ENCODE measurements at regions of chr9 and their contacts with region 1.

Region 1: GRCh38 chr9:122350638-122351355 is 20.0 kb upstream of the PTGS1 start:
- DNase-seq: peak; percentile 83 to 88 (median 88)
- ATAC-seq: peak; percentile 99
- H3K4me3 ChIP-seq: no peak overlapping the region
- H3K27ac ChIP-seq: no peak overlapping the region
- H3K4me1 ChIP-seq: peaks cover 0 to 4% of the 10 kb centered on the region in 2 experiments; a peak in 1 of 5 replicates
- H3K27me3 ChIP-seq: no peaks in the 10 kb centered on the region; a peak in 1 of 5 replicates
- CTCF ChIP-seq: peak; percentile 94 to 98 (median 98)
- EP300 ChIP-seq: no peak
- POLR2A ChIP-seq: no peak
- RAD21 ChIP-seq: peak; percentile 97 to 100

Region 2: GRCh38 chr9:121686930-121687541 is 663.8 kb before region 1 on chr9:
- CTCF ChIA-PET with region 1: no interaction called
- POLR2A ChIA-PET with region 1: no interaction called
- in situ Hi-C with region 1: loop called (anchors 25 kb)
- intact Hi-C with region 1: no loop called
- DNase-seq: peak; percentile 71 to 80 (median 74)
- ATAC-seq: peak; percentile 90
- H3K4me3 ChIP-seq: no peak overlapping the region
- H3K27ac ChIP-seq: no peak overlapping the region
- H3K4me1 ChIP-seq: no peaks in the 10 kb centered on the region
- H3K27me3 ChIP-seq: peaks cover 0 to 15% of the 10 kb centered on the region in 2 experiments; a peak in 3 of 5 replicates
- CTCF ChIP-seq: peak; percentile 80 to 87 (median 84)
- EP300 ChIP-seq: no peak
- POLR2A ChIP-seq: no peak
- RAD21 ChIP-seq: peak; percentile 51 to 81

Region 3: GRCh38 chr9:122092611-122093506 is 257.9 kb before region 1 on chr9 and contains the start of gene TTLL11:
- CTCF ChIA-PET with region 1: interaction called, 5 read pairs
- POLR2A ChIA-PET with region 1: no interaction called
- in situ Hi-C with region 1: no loop called
- intact Hi-C with region 1: loop called (anchors 1 kb)
- DNase-seq: peak; percentile 95 to 96 (median 95)
- ATAC-seq: peak; percentile 92
- H3K4me3 ChIP-seq: peak within 1 kb of the TSS; percentile 96
- H3K27ac ChIP-seq: peak within 1 kb of the TSS; percentile 52; the same call in 2 of the 3 replicates
- H3K4me1 ChIP-seq: peaks cover 9 to 20% of the 10 kb centered on the region in 2 experiments; a peak in 4 of 5 replicates
- H3K27me3 ChIP-seq: no peaks in the 10 kb centered on the region
- CTCF ChIP-seq: no peak
- EP300 ChIP-seq: no peak
- POLR2A ChIP-seq: no peak; the same call in 1 of the 2 replicates
- RAD21 ChIP-seq: no peak
- polyA plus RNA-seq, gene TTLL11: 0.83 to 1.5 TPM

Region 4: GRCh38 chr9:122099271-122099869 is 251.4 kb before region 1 on chr9:
- CTCF ChIA-PET with region 1: interaction called, 9 read pairs
- POLR2A ChIA-PET with region 1: interaction called, 3 read pairs
- in situ Hi-C with region 1: no loop called
- intact Hi-C with region 1: loop called (anchors 1 kb)
- DNase-seq: peak; percentile 76 to 88 (median 80)
- ATAC-seq: peak; percentile 90
- H3K4me3 ChIP-seq: no peak overlapping the region
- H3K27ac ChIP-seq: no peak overlapping the region
- H3K4me1 ChIP-seq: no peaks in the 10 kb centered on the region; a peak in 2 of 5 replicates
- H3K27me3 ChIP-seq: peaks cover 0 to 11% of the 10 kb centered on the region in 2 experiments; a peak in 1 of 5 replicates
- CTCF ChIP-seq: peak; percentile 85 to 90 (median 90)
- EP300 ChIP-seq: no peak
- POLR2A ChIP-seq: no peak
- RAD21 ChIP-seq: peak; percentile 73 to 82

Region 5: GRCh38 chr9:122125158-122125508 is 225.7 kb before region 1 on chr9:
- CTCF ChIA-PET with region 1: interaction called, 88 read pairs
- POLR2A ChIA-PET with region 1: interaction called, 11 read pairs
- in situ Hi-C with region 1: loop called (anchors 5 kb)
- intact Hi-C with region 1: loop called (anchors 1 kb)
- DNase-seq: peak; percentile 87 to 88 (median 88)
- ATAC-seq: peak; percentile 91
- H3K4me3 ChIP-seq: no peak overlapping the region
- H3K27ac ChIP-seq: no peak overlapping the region
- H3K4me1 ChIP-seq: peaks cover 0 to 30% of the 10 kb centered on the region in 2 experiments; a peak in 3 of 5 replicates
- H3K27me3 ChIP-seq: peaks cover 0 to 18% of the 10 kb centered on the region in 2 experiments; a peak in 3 of 5 replicates
- CTCF ChIP-seq: peak; percentile 94 to 96 (median 96)
- EP300 ChIP-seq: no peak
- POLR2A ChIP-seq: no peak
- RAD21 ChIP-seq: peak; percentile 99 to 100

Region 6: GRCh38 chr9:122374885-122375420 is 24.2 kb after region 1 on chr9:
- CTCF ChIA-PET with region 1: no interaction called
- POLR2A ChIA-PET with region 1: no interaction called
- in situ Hi-C with region 1: no loop called
- intact Hi-C with region 1: no loop called
- DNase-seq: peak; percentile 78 to 87 (median 84)
- ATAC-seq: peak; percentile 66
- H3K4me3 ChIP-seq: peak overlapping the region; percentile 10; the same call in 1 of the 2 replicates
- H3K27ac ChIP-seq: peak overlapping the region; percentile 76
- H3K4me1 ChIP-seq: peaks cover 60 to 67% of the 10 kb centered on the region in 2 experiments
- H3K27me3 ChIP-seq: no peaks in the 10 kb centered on the region
- CTCF ChIP-seq: no peak
- EP300 ChIP-seq: 0 out of 2 replicates have a peak, but pooled peaks have one; percentile 4
- POLR2A ChIP-seq: no peak
- RAD21 ChIP-seq: no peak

Region 7: GRCh38 chr9:122453677-122454135 is 102.9 kb after region 1 on chr9:
- CTCF ChIA-PET with region 1: no interaction called
- POLR2A ChIA-PET with region 1: no interaction called
- in situ Hi-C with region 1: loop called (anchors 5 kb)
- intact Hi-C with region 1: loop called (anchors 1 kb)
- DNase-seq: no peak
- ATAC-seq: no peak
- H3K4me3 ChIP-seq: no peak overlapping the region
- H3K27ac ChIP-seq: no peak overlapping the region
- H3K4me1 ChIP-seq: no peaks in the 10 kb centered on the region
- H3K27me3 ChIP-seq: no peaks in the 10 kb centered on the region
- CTCF ChIP-seq: no peak
- EP300 ChIP-seq: no peak
- POLR2A ChIP-seq: no peak
- RAD21 ChIP-seq: no peak

Measured in K562 (cell line).